Uterus (tissue), 4 donors: ENCODE measurements at regions of chr1 and their contacts with region 1.

Region 1: GRCh38 chr1:108816049-108816893 is 40.6 kb downstream of the AKNAD1 start:
- DNase-seq: peak; percentile 83 to 89
- H3K4me3 ChIP-seq: peak overlapping the region; percentile 9 to 32
- H3K27ac ChIP-seq: peak overlapping the region; percentile 92 to 95
- H3K4me1 ChIP-seq: peaks cover 11 to 12% of the 10 kb centered on the region in 2 donors
- H3K27me3 ChIP-seq: no peaks in the 10 kb centered on the region
- CTCF ChIP-seq: no peak
- POLR2A ChIP-seq: no peak

Region 2: GRCh38 chr1:108643492-108644335 is 172.6 kb before region 1 on chr1:
- intact Hi-C with region 1: no loop called
- DNase-seq: peak in 1 of 2 donors; percentile 60
- H3K4me3 ChIP-seq: no peak overlapping the region
- H3K27ac ChIP-seq: no peak overlapping the region
- H3K4me1 ChIP-seq: no peaks in the 10 kb centered on the region
- H3K27me3 ChIP-seq: no peaks in the 10 kb centered on the region
- CTCF ChIP-seq: peak; percentile 53 to 88 (median 70)
- POLR2A ChIP-seq: no peak

Region 3: GRCh38 chr1:108746372-108747205 is 69.7 kb before region 1 on chr1 and contains the start of gene STXBP3:
- intact Hi-C with region 1: loop called (anchors 10 kb)
- DNase-seq: peak; percentile 98 to 99
- H3K4me3 ChIP-seq: peak within 1 kb of the TSS; percentile 75 to 84
- H3K27ac ChIP-seq: peak within 1 kb of the TSS; percentile 97
- H3K4me1 ChIP-seq: peaks cover 3 to 10% of the 10 kb centered on the region in 2 donors
- H3K27me3 ChIP-seq: no peaks in the 10 kb centered on the region
- CTCF ChIP-seq: peak; percentile 92 to 98 (median 94)
- POLR2A ChIP-seq: peak; percentile 98 to 99
- total RNA-seq, gene STXBP3: 29.5 to 166 (median 64.1) TPM

Region 4: DNA sequence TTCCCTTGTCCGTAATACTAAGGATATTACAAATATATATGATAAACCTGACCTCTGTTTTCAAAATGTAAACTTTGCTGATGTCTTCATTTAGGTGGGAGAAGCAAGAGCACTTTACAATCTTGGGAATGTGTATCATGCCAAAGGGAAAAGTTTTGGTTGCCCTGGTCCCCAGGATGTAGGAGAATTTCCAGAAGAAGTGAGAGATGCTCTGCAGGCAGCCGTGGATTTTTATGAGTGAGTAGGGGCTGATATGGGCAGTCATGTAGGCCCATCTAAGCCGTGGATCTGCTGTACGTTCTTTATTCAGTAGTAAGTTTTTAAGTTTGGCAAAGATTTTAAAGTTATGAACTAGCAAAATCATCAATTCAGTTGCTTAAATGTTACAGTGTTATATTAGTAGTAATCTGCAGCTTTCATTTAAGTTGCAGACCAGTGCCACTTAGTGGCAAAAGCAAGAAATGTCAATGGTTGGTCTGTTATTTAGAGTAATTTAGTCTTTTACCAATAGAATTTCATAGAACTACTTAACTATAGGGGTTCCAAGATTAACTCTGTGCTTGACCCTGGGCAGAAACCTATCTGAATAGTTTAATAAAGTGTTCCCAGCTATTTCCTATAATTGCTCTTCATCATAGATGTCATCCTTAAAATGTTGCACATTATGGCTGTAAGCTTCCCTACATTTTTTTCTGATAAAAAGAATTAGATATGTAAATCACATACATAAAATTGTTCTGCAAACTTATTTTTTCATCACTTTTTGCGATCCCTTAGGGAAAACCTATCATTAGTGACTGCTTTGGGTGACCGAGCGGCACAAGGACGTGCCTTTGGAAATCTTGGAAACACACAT is 81.8 kb after region 1 on chr1:
- intact Hi-C with region 1: loop called (anchors 5 kb)
- DNase-seq: peak in 1 of 2 donors; percentile 42
- H3K4me3 ChIP-seq: no peak overlapping the region
- H3K27ac ChIP-seq: no peak overlapping the region
- H3K4me1 ChIP-seq: no peaks in the 10 kb centered on the region
- H3K27me3 ChIP-seq: no peaks in the 10 kb centered on the region
- CTCF ChIP-seq: peak; percentile 74 to 89 (median 80)
- POLR2A ChIP-seq: no peak